Lower leg skin (tissue), 4 donors: ENCODE measurements at regions of chr9 and their contacts with region 1.

Region 1: DNA sequence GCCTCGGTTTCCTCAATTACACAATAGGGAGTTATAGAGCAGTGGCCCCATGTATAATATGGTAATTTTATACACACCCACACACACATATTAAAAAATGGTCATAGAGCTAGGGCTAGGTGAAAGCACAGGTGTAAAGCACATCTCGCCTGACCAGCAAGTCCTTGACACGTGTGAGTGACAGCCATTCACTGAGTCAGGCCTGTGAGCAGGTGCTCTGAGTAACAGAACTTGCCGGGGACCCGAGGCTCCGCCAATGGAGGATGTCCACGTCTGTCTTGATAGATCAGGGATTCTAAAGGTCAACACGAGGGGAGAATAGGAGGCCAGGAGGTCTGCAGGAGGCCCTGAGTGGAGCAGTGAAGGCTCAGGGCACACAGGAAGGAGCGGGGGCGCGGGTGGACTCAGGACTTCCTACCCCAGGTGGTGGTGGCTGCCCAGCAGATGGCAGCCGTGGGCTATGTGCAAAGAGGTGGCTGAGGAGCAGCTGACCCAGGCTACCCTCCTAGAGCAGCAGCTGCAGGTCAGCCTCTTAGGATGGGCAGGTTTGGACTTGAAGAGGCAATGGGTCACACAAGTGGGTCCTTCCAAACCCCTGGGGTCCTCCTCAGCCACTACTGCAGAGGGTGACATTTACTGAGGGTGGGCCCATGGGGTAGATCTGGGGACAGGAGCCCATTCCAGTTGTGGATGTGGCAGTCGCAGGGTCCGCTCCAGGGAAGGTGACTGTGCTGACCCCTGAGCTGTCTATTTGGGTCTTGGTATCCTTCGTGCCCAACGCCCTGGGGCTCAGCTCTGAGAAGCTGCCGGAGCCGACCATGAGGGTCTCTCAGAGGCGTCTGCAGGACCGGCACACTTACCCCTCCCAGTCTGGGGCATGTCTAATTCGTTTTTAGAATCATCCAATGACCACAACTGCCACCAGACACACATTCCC is 45.9 kb downstream of the PRRT1B start:
- DNase-seq: peak; percentile 63 to 93
- H3K4me3 ChIP-seq: no peak overlapping the region
- CTCF ChIP-seq: no peak
- POLR2A ChIP-seq: no peak

Region 2: GRCh38 chr9:131024978-131025868 is 566.0 kb before region 1 on chr9:
- intact Hi-C with region 1: no loop called
- DNase-seq: no peak
- H3K4me3 ChIP-seq: no peak overlapping the region
- CTCF ChIP-seq: no peak
- POLR2A ChIP-seq: no peak

Region 3: GRCh38 chr9:131739980-131740648 is 148.9 kb after region 1 on chr9 and contains the start of gene RAPGEF1:
- intact Hi-C with region 1: loop called (anchors 2 kb)
- DNase-seq: peak in 1 of 2 donors; percentile 93
- H3K4me3 ChIP-seq: peak within 1 kb of the TSS; percentile 28
- CTCF ChIP-seq: peak in 1 of 3 donors; percentile 29
- POLR2A ChIP-seq: no peak
- total RNA-seq, gene RAPGEF1: 18.0 to 70.8 (median 43.5) TPM